ENCODE measurements at regions of chr7 and their contacts with region 1.

Region 1: DNA sequence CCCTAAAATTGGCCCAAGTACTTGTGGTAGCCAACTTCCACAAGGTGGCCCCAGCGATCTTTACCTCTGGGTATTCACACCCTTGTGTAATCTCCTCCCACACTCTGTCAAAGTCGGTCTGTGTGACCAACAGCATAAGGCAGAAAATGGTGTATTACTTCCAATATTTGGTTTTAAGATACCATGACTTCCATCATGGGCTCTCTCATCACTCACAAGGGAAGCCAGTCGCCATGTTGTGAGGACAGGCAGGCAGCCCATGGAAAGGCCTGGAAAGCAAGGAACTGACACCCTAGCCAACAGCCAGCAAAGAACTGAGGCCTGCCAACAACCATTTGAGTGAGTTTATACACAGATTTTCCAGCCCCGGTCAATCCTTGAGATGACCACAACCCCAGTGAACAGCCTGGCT is 91.0 kb upstream of the KMT2E start:
- DNase-seq: peak; percentile 90
- H3K4me3 Mint-ChIP-seq: no peak overlapping the region
- H3K27ac Mint-ChIP-seq: no peak overlapping the region
- H3K4me1 Mint-ChIP-seq: no peaks in the 10 kb centered on the region
- H3K27me3 Mint-ChIP-seq: peaks cover 5% of the 10 kb centered on the region
- CTCF ChIP-seq: peak; percentile 89

Region 2: GRCh38 chr7:104231054-104232046 is 691.7 kb before region 1 on chr7:
- CTCF ChIA-PET with region 1: interaction called, 67 read pairs
- POLR2A ChIA-PET with region 1: interaction called, 4 read pairs
- intact Hi-C with region 1: loop called (anchors 5 kb)
- DNase-seq: peak; percentile 57
- H3K4me3 Mint-ChIP-seq: no peak overlapping the region
- H3K27ac Mint-ChIP-seq: no peak overlapping the region
- H3K4me1 Mint-ChIP-seq: no peaks in the 10 kb centered on the region
- H3K27me3 Mint-ChIP-seq: peaks cover 61% of the 10 kb centered on the region
- CTCF ChIP-seq: peak; percentile 83

Region 3: DNA sequence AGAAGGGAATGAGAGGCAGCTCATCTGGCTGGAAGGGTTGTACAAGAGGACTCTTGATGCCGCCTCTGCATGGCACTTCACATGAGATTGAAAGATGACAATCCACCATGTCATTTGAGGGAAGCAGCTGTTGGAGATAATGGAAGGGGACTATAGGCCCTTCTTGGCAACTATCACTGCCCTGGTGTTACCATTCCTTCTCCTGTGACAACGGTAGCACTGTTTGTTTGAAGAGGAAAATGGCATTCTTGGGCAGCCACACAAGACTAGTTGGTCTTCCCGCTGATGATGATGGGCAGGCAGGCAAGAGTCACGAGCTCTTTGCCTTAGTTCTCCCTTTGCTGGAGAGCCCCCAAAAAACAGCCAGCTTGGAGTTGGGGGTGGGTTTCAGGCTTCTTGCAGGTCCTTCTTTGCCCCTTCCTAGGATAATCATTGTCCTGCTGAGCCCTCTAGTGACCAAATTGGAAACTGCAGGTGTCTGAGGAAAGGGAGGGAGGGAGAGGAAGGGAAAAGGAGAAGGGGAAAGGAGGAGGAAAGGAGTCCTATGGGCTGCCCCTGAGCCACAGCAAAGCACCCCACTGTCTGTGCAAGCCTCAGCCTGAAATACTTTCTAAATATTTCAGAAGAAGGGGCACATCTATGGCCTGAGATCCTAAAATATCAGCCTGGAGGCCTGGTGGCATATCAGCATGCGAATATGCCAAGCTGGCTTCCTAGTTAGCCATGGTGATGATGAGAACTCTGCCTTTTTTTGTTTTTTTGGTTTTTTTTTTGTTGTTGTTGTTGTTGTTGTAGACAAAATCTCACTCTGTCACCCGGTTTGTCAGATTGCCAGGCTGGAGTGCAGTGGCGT is 74.7 kb before region 1 on chr7:
- CTCF ChIA-PET with region 1: interaction called, 15 read pairs
- POLR2A ChIA-PET with region 1: no interaction called
- intact Hi-C with region 1: no loop called
- DNase-seq: peak; percentile 72
- H3K4me3 Mint-ChIP-seq: no peak overlapping the region
- H3K27ac Mint-ChIP-seq: no peak overlapping the region
- H3K4me1 Mint-ChIP-seq: no peaks in the 10 kb centered on the region
- H3K27me3 Mint-ChIP-seq: peaks cover 52% of the 10 kb centered on the region
- CTCF ChIP-seq: peak; percentile 93

Region 4: DNA sequence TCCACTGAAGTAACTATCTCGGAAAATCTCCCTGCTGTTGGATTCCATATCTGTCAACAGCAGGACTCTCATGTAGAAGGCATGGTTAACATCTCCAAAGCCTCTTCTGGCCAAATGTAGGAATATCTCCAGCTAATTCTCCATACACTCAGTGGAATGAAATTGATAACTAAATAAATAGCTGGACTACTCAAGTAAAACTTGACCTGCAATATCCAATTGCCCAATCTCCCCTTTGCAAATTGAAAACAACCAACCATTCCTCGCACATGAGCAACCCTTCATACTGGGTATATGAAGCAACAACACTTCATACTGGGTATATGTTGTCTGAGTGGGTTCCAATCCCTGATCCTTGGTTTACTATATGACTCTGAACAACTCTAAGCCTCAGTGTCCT is 14.4 kb before region 1 on chr7:
- CTCF ChIA-PET with region 1: interaction called, 39 read pairs
- POLR2A ChIA-PET with region 1: no interaction called
- intact Hi-C with region 1: no loop called
- DNase-seq: no peak
- H3K4me3 Mint-ChIP-seq: no peak overlapping the region
- H3K27ac Mint-ChIP-seq: no peak overlapping the region
- H3K4me1 Mint-ChIP-seq: no peaks in the 10 kb centered on the region
- H3K27me3 Mint-ChIP-seq: peaks cover 54% of the 10 kb centered on the region
- CTCF ChIP-seq: no peak

Region 5: DNA sequence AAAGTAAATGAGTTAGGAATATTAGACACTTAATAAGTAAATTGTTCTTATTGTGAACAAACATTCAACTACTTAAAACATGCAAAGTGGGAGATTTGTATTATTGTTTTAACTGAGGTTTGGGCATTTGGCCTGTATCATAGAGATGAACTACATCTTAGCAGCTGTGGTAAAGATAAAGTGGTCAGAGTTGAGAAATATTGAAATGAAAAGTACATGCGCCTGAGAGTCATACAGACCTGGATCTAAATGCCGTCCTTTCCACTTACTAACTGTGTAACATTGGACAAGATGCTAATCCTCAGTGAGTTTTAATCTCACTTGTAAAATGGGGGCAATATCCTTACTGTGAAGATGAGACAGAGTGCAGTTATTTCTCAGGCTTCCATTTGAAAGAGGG is 165.4 kb after region 1 on chr7:
- CTCF ChIA-PET with region 1: interaction called, 3 read pairs
- POLR2A ChIA-PET with region 1: no interaction called
- intact Hi-C with region 1: loop called (anchors 5 kb)
- DNase-seq: no peak
- H3K4me3 Mint-ChIP-seq: no peak overlapping the region
- H3K27ac Mint-ChIP-seq: no peak overlapping the region
- H3K4me1 Mint-ChIP-seq: no peaks in the 10 kb centered on the region
- H3K27me3 Mint-ChIP-seq: no peaks in the 10 kb centered on the region
- CTCF ChIP-seq: no peak

Region 6: DNA sequence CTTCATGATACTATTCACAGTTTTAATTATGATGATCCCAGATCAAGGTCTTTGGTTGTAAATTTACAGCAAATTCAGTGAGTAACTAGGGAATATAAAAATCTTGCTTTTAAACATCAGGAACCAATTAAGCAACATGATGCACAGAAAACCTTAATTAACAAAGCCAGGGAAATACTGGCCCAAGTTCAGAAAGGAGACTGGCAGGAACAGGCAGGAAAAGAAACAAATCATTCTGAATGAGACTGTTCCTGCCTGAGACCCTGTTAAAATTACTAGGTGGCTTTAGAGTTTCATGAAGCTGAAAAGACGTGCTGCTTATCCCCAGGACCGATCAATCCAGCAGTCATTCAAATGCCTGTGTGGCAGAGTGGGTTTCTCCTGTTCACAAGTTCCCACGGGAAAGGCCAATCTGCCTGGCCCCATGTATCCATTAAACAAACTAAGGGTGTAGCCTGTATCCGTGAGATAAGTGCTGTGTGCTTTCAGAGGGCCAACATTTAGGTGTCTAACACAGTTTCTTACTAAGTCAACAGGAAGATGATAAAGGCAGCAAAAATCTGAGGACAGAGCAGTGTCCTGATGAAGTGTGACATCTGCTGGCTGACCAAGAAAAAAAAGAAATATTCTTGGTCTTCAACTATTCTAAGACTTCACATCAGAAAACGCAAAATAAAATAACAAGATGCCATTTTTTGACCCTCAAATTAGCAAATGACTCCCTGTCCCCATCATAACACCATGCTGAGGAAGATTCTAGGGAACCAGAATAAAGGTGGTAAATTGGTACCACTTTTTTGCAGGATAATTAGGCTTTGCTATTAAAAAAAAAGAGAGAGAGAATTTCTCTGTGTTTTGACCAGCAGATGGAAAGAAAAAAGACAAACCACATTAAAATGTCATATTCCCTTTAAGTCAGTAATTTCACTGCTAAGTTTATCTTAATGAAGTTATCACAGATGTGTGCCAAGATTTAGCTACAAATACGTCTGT is 564.9 kb after region 1 on chr7:
- CTCF ChIA-PET with region 1: no interaction called
- POLR2A ChIA-PET with region 1: no interaction called
- intact Hi-C with region 1: loop called (anchors 1 kb)
- DNase-seq: peak; percentile 23
- H3K4me3 Mint-ChIP-seq: no peak overlapping the region
- H3K27ac Mint-ChIP-seq: peak overlapping the region; percentile 67
- H3K4me1 Mint-ChIP-seq: no peaks in the 10 kb centered on the region
- H3K27me3 Mint-ChIP-seq: no peaks in the 10 kb centered on the region
- CTCF ChIP-seq: peak; percentile 43

Region 7: DNA sequence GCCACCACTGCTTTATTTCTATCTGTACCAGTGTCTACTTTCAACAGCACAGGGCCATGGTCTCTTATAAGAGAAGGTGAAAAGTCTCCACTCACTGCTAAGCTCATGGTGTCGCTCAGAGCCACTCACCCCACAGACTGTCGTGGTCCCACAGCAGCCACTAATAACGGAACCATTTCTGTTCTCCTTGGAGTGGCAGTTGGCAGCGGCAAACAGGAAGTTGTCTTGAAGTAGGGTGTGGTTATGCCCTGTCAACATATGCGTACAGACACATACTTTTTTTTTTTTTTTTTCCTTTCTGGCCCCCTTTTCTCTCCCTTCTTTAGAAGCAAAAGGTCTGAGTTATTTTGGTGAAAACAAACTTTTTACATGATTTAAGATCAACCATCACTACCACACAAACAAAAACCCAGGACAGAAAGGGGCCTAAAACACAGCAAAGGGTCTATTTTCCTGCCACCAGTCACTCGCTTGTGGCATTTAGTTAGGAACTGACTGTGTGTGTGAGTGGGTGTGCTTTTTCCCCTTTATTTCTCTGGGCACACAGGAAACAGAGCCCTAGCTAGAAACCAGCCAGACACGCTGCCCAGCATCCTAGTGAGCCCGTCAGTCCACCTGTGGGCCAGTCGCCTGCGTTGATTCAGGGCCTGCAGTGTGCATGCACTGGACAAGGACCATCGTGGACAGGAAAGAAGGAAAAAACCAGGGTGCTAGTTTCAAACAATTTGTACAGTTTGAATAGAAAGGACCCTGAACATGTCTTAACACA is 755.0 kb after region 1 on chr7:
- CTCF ChIA-PET with region 1: no interaction called
- POLR2A ChIA-PET with region 1: no interaction called
- intact Hi-C with region 1: no loop called
- DNase-seq: no peak
- H3K4me3 Mint-ChIP-seq: no peak overlapping the region
- H3K27ac Mint-ChIP-seq: no peak overlapping the region
- H3K4me1 Mint-ChIP-seq: peaks cover 17% of the 10 kb centered on the region
- H3K27me3 Mint-ChIP-seq: no peaks in the 10 kb centered on the region
- CTCF ChIP-seq: no peak